ENCODE measurements at regions of chr9 and their contacts with region 1.

Region 1: GRCh38 chr9:116149844-116150243 is 3.7 kb upstream of the PAPPA start:
- DNase-seq: no peak

Region 2: GRCh38 chr9:115591584-115591984 is 558.3 kb before region 1 on chr9:
- intact Hi-C with region 1: loop called (anchors 10 kb)
- DNase-seq: no peak

Region 3: GRCh38 chr9:115883457-115884329 is 266.2 kb before region 1 on chr9:
- intact Hi-C with region 1: loop called (anchors 10 kb)
- DNase-seq: no peak

Region 4: GRCh38 chr9:115944166-115944948 is 205.5 kb before region 1 on chr9:
- intact Hi-C with region 1: loop called (anchors 10 kb)
- DNase-seq: no peak

Region 5: DNA sequence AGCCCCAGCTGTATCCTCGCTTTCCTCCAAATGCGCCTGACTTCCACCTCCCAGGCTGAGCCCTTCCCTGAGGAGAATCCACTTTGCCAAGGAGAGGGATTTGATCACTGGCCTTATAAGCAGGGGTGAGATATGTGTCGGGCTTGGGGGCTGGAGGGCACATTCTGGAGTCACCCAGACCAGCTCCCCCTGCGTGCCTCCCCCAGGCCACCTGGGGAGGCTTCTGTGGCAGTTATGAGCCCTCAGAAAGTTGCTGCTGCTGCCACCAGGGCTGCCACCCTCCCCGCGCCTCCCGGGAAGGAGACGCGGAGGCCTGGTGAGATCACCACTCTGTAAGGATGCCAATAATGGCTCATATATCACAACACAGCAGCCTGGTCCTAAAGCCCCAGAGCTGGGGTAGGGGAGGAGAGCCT is 215.2 kb after region 1 on chr9:
- intact Hi-C with region 1: loop called (anchors 10 kb)
- DNase-seq: peak; percentile 83

Region 6: DNA sequence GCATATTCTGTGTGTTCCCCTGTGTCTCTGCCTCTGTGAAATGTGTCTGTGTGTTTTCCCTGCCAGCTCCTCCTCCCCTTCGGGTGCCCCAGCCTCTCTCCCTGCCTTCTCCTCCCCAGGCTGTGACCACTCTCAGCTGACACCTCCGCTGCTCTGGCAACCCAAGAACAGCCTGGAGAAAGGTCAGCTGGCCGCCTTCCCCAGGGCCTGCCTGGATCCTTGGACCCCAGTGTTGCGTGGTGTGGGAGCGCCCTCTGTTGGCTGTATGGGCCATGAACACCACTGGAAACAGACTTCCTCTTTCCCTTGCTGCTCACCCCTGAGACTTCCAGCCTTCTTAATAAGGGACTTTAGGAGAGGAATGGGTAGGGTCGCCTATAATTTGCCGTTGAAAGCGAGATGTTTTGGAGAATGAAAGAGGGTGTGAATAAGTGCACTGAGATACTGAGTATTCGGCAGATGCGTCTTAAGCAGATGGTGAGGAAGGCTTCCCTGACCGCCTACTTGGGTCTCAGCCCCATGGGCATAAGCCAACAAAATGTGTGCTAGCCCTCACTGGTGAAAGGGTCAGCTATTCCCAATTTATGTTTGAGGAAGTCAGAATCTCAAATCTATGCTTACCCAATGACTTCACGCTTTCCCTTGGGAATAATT is 422.4 kb after region 1 on chr9:
- intact Hi-C with region 1: loop called (anchors 2 kb)
- DNase-seq: peak; percentile 93

Region 7: DNA sequence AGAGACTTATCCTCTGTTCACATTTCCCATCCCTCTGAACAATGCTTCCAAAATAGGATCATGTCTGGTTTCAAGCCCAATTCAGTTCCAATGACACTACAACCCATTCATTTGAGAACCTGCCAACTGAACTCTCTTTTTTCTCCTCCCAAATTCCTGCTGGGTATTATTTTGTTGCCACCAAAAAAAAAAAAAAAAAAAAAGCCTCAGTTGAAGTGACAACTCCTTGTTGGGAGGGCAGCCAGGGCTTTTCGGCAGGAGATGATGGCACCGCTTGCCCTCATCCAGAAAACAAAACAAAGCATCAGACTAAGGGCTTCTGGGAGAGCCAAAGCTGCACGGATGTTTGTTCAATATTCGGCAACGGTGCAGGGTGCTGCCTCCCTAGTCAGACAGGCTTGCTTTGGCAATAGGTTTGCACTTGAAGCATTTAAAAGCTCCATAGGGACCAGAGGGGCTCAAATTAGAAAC is 506.7 kb after region 1 on chr9:
- intact Hi-C with region 1: loop called (anchors 5 kb)
- DNase-seq: no peak

Measured in cardiac septum (tissue), 1 donor.